Mucosa of descending colon (tissue), 3 donors: ENCODE measurements at regions of chr2 and their contacts with region 1.

Region 1: DNA sequence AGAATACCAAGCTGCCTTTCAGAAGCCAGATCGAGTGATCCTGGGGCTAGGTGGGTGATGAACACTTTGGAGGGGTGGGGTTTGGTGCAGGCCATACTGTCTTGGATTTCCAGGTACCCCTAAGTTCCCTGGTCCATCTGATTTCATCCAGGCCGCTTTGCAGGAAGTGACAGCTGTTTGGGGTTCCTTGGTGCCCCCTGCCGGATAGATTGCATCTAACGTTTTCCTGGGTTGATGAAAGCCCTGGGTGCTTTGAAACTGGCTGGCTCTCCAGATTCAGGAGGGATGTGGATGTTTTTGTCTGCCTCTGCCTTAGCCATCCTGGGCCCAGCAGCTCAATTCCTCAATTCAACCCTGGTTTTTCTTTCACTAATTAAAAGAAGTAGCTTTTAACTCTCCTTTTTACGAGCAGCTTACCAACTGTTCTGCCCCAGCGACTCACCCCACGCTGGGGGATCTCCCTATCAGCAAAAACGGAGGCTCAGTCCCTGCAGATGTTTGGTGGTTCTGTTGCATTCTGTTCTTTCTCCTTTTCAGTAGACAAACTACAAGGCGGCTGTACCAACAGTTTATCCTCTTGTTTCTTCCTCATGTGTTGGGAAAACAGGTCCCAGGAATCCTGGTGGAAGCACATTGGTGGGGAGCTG is 37.1 kb downstream of the ARHGEF4 start:
- DNase-seq: peak in 2 of 3 donors; percentile 74 to 91
- ATAC-seq: peak; percentile 74
- H3K4me3 ChIP-seq: no peak overlapping the region
- H3K4me1 ChIP-seq: no peaks in the 10 kb centered on the region
- CTCF ChIP-seq: peak; percentile 25

Region 2: DNA sequence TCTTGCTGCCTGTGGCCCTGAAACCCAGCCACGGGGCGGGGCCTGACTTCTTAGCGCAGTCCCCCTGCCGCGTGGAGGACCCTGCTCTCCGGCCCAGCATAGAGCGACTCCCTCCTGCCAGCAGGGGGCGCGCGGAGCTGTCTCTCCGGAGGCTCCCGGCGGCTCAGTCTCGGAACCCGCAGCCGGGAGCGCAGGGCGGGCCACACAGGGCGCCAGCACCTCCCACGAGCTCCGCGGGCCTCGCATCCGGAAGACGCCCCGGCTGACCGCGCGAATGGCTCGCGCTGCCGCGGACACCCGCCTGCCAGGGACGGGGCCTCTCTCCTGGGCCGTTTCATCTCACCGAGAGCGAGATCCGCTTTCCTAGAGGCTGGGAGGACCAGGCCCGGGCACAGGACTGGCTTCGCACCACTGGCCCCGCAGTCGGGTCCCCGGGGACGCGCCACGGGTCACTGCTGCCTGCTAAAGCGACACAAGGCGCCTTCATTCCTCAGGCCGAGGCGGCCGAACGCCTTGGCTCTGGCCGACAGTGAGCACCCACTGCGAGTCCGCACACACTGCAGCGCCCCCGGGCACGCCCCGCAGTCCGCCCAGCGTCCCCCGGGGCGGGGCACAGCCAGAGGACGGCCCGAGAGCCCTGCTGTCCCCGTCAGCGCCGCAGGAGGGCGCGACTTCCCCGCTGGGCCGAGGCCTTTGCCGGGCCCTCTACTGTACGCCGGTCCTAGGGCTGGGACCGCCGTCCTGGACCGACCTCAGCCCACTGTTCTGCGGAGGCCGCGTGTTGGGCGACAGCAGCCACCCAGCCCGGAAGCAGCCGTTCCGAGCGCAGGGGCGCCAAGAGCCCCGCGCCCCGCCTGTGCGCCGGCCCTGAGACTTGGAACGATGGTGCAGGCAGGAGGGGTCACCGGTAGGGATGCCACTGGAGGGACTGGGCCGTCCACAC is 76.1 kb before region 1 on chr2:
- intact Hi-C with region 1: loop called (anchors 5 kb)
- DNase-seq: peak; percentile 91 to 93 (median 92)
- ATAC-seq: peak; percentile 98
- H3K4me3 ChIP-seq: peak overlapping the region; percentile 39
- H3K4me1 ChIP-seq: peaks cover 7% of the 10 kb centered on the region
- CTCF ChIP-seq: peak; percentile 95

Region 3: DNA sequence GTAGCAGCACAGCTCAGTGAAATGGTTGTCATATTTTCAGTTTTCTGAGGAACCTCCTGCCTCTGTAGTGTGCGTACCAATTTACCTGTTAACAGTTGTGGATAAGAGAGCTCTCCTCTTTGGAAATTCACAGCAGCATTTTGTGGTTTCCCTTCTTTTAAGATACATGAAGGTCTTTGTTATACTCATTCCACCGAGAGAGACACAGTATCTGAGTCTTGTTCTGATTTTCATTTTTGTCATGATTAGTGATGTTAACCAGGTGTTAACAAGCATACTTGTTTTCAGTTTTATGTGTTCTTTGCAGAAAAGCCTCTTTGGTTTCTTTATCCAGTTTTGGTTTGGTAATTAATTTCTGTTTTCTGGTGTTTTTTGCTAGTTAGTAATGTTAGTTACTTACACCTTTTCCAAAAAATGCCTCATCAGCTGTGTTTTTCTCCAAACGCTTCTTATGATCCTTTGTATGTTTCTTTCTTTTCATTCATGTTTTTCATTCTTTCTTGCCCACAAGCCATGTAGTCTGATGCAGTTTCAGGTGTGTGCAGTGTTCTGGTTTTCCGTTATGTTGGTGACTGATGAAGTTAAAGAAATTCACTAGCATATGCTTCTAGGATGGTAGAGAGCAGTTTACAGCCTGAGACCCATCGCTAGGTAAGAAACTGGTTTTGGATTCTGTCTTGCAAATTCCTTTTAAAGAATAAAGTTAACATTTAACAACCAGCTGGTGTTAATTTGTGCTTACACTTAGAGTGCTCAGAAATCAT is 683.9 kb after region 1 on chr2:
- intact Hi-C with region 1: no loop called
- DNase-seq: no peak
- ATAC-seq: no peak
- H3K4me3 ChIP-seq: no peak overlapping the region
- H3K4me1 ChIP-seq: no peaks in the 10 kb centered on the region
- CTCF ChIP-seq: no peak